H1 (cell line): ENCODE measurements at regions of chr6 and their contacts with region 1.

Region 1: GRCh38 chr6:33812669-33813068 is 8.9 kb upstream of the MLN start:
- DNase-seq: peak; percentile 71 to 91
- H3K4me3 ChIP-seq: peak overlapping the region in 1 of 4 experiments; percentile 19; a peak in 1 of 8 replicates
- H3K27ac ChIP-seq: no peak overlapping the region
- H3K4me1 ChIP-seq: peaks cover 30 to 54% (median 38%) of the 10 kb centered on the region in 4 experiments
- H3K27me3 ChIP-seq: no peaks in the 10 kb centered on the region
- CTCF ChIP-seq: peak in 2 of 3 experiments; percentile 36 to 47; a peak in 3 of 4 replicates
- EP300 ChIP-seq: no peak
- POLR2A ChIP-seq: no peak
- RAD21 ChIP-seq: peak; percentile 13 to 38; a peak in 2 of 4 replicates

Region 2: DNA sequence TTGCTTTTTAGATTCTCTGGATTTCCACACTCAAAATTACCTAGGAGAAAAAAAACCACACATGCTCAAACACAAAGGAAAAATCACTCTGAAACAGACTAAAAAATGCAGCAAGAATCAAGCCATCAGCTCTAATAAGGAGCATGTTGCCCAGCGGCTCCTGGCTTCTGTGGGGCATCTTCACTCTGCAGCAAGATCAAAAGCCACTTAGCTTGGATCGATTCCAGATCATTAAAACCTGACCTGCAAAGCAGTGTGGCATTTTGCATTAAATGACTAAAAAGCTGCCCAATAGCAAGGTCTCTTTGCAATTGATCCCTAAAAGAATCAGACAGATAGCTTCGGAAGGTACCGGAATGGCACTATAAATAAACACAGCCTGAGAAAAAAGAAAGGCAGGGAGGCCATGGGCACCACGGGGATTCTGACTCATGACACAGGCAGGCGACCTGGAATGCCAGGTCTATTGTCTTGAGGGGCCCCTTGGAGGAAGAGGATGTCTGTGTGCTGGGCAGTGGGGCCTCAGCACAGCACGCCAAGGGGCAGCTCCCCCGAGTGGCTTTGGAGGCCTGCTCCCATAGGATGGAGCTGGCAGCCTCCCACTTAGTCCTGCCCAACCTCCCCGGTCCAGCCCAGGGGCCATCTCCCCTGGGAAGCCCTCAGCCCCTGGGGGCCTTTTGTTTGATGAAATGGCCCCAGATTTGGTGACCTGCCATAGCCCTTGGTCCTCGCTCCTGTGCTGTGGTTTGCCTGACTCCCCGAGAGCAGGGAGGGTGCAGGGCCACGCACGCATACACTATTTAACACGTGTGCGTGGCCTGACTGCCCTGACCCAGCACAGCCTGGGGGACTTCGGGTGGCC is 31.3 kb before region 1 on chr6:
- CTCF ChIA-PET with region 1: interaction called, 18 read pairs
- POLR2A ChIA-PET with region 1: interaction called, 9 read pairs
- DNase-seq: peak; percentile 72 to 87
- H3K4me3 ChIP-seq: 0 out of 8 replicates have a peak overlapping the region, but pooled peaks of 1 of the 4 experiments have one; percentile 6
- H3K27ac ChIP-seq: peak overlapping the region; percentile 75
- H3K4me1 ChIP-seq: peaks cover 24 to 55% (median 40%) of the 10 kb centered on the region in 4 experiments
- H3K27me3 ChIP-seq: no peaks in the 10 kb centered on the region
- CTCF ChIP-seq: no peak
- EP300 ChIP-seq: peak in 1 of 2 experiments; percentile 78; a peak in 1 of 3 replicates
- POLR2A ChIP-seq: peak in 1 of 2 experiments; percentile 60; a peak in 1 of 3 replicates
- RAD21 ChIP-seq: no peak

Region 3: GRCh38 chr6:33794891-33795623 is 17.6 kb before region 1 on chr6:
- CTCF ChIA-PET with region 1: interaction called, 17 read pairs
- POLR2A ChIA-PET with region 1: interaction called, 4 read pairs
- DNase-seq: no peak
- H3K4me3 ChIP-seq: no peak overlapping the region
- H3K27ac ChIP-seq: no peak overlapping the region
- H3K4me1 ChIP-seq: peaks cover 8 to 39% (median 26%) of the 10 kb centered on the region in 4 experiments
- H3K27me3 ChIP-seq: no peaks in the 10 kb centered on the region
- CTCF ChIP-seq: peak in 1 of 3 experiments; percentile 1; a peak in 1 of 4 replicates
- EP300 ChIP-seq: no peak
- POLR2A ChIP-seq: no peak
- RAD21 ChIP-seq: no peak; a peak in 1 of 4 replicates

Region 4: DNA sequence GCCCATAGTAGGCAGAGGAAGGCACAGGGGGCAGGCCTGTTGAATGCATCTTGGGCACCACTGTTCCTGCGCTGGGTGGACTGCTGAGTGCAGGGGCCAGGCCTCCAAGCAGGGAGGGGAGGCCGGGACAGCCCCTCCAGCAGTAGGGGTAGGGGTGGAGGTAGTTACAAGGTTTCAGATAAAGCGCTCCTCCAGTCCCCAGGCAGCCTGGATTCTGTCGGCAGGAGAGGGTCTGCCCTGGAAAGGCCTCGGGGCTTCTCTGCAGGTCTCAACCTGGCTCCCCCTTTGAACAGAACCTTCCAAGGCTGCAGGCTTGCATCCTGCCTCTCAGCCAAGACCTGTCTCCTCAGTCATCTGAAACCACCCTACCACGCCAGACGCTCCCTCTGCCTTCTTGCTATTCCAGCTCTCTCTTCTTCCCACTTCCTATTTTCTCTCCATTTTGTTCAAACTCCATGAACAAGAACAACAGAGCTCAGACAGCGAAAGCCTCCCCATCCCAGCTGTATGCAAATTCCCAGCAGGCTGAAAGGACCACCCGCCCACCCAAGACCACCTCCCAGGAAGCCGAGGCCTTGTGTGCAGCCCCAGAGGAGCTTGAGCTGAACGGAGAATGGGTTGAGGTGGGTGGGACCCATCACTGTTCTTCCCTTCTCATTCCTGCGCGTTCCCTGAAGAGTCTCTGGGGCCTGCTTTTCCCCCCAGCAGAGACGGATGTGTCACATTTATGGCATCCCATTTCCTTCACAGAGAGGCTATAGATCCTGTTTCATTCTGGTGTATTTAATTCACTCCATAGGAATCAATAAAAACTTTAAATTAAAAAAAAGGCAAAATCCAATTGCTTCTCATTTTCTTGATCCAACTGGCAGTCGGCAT is 10.2 kb before region 1 on chr6:
- CTCF ChIA-PET with region 1: interaction called, 26 read pairs
- POLR2A ChIA-PET with region 1: interaction called, 6 read pairs
- DNase-seq: no peak
- H3K4me3 ChIP-seq: no peak overlapping the region
- H3K27ac ChIP-seq: no peak overlapping the region
- H3K4me1 ChIP-seq: peaks cover 0 to 10% (median 3%) of the 10 kb centered on the region in 4 experiments; a peak in 5 of 7 replicates
- H3K27me3 ChIP-seq: peaks cover 0 to 6% (median 1%) of the 10 kb centered on the region in 4 experiments; a peak in 3 of 7 replicates
- CTCF ChIP-seq: no peak
- EP300 ChIP-seq: no peak
- POLR2A ChIP-seq: no peak
- RAD21 ChIP-seq: no peak

Region 5: GRCh38 chr6:33822575-33823395 is 10.1 kb after region 1 on chr6:
- CTCF ChIA-PET with region 1: interaction called, 15 read pairs
- POLR2A ChIA-PET with region 1: no interaction called
- DNase-seq: peak; percentile 41 to 72
- H3K4me3 ChIP-seq: no peak overlapping the region
- H3K27ac ChIP-seq: peak overlapping the region; percentile 10; the same call in 1 of the 2 replicates
- H3K4me1 ChIP-seq: peaks cover 0 to 11% (median 4%) of the 10 kb centered on the region in 4 experiments; a peak in 3 of 7 replicates
- H3K27me3 ChIP-seq: peaks cover 0 to 3% (median 1%) of the 10 kb centered on the region in 4 experiments; a peak in 4 of 7 replicates
- CTCF ChIP-seq: peak in 2 of 3 experiments; percentile 66 to 89; a peak in 3 of 4 replicates
- EP300 ChIP-seq: no peak
- POLR2A ChIP-seq: no peak
- RAD21 ChIP-seq: peak; percentile 41 to 60

Region 6: DNA sequence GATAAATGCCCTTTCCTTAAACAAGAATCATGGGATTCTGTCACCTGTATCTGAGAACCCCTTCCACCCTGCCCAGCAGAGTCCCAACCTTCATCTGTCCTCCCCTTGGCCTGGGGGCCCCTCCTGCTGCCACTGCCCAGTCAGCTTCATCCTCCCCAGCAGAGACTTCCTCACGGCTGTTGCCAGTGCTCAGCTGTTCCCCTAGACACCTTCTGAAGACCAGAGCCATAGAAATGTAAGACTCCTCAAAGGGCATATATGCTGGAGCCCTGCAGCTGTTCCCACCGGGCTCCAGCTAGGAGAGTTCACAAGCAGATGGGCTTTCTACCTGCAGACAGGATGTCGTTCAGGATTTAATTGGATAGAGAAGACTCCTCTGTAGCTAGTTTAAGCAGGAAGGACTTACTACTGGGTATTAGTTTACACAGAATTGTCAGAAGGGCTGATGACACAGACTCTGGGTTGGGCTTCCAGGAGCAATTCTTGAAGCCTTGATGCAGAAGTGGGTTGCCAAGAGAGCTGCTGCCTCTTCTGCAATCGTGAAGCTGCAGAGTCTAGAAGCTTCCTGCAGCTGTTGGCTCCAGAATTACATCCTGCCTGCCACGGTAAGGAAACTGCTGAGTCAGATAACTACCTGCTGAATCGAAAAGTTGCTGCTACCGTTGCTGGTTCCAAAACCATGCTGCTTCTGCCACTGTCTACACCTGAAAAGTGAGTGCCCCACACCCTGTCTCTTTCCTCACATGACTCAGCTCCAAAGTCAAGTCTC is 48.2 kb after region 1 on chr6:
- CTCF ChIA-PET with region 1: no interaction called
- POLR2A ChIA-PET with region 1: no interaction called
- DNase-seq: no peak
- H3K4me3 ChIP-seq: no peak overlapping the region
- H3K27ac ChIP-seq: no peak overlapping the region
- H3K4me1 ChIP-seq: no peaks in the 10 kb centered on the region; a peak in 1 of 7 replicates
- H3K27me3 ChIP-seq: 0 out of 7 replicates have a peak, but pooled peaks cover 0 to 1% (median 0%) of the 10 kb centered on the region in 4 experiments
- CTCF ChIP-seq: no peak
- EP300 ChIP-seq: no peak
- POLR2A ChIP-seq: no peak
- RAD21 ChIP-seq: no peak

Region 7: GRCh38 chr6:33882154-33882553 is 69.5 kb after region 1 on chr6:
- CTCF ChIA-PET with region 1: no interaction called
- POLR2A ChIA-PET with region 1: no interaction called
- DNase-seq: no peak
- H3K4me3 ChIP-seq: no peak overlapping the region
- H3K27ac ChIP-seq: no peak overlapping the region
- H3K4me1 ChIP-seq: peaks cover 0 to 7% (median 0%) of the 10 kb centered on the region in 4 experiments; a peak in 3 of 7 replicates
- H3K27me3 ChIP-seq: no peaks in the 10 kb centered on the region
- CTCF ChIP-seq: no peak
- EP300 ChIP-seq: no peak
- POLR2A ChIP-seq: no peak
- RAD21 ChIP-seq: no peak